Panc1 (cell line): ENCODE measurements at regions of chr1 and their contacts with region 1.

Region 1: GRCh38 chr1:218242169-218242568 is 42.9 kb upstream of the RRP15 start:
- DNase-seq: no peak
- ATAC-seq: no peak
- H3K4me3 ChIP-seq: no peak overlapping the region
- H3K27ac ChIP-seq: no peak overlapping the region
- H3K4me1 ChIP-seq: no peaks in the 10 kb centered on the region
- H3K27me3 ChIP-seq: no peaks in the 10 kb centered on the region
- CTCF ChIP-seq: no peak

Region 2: DNA sequence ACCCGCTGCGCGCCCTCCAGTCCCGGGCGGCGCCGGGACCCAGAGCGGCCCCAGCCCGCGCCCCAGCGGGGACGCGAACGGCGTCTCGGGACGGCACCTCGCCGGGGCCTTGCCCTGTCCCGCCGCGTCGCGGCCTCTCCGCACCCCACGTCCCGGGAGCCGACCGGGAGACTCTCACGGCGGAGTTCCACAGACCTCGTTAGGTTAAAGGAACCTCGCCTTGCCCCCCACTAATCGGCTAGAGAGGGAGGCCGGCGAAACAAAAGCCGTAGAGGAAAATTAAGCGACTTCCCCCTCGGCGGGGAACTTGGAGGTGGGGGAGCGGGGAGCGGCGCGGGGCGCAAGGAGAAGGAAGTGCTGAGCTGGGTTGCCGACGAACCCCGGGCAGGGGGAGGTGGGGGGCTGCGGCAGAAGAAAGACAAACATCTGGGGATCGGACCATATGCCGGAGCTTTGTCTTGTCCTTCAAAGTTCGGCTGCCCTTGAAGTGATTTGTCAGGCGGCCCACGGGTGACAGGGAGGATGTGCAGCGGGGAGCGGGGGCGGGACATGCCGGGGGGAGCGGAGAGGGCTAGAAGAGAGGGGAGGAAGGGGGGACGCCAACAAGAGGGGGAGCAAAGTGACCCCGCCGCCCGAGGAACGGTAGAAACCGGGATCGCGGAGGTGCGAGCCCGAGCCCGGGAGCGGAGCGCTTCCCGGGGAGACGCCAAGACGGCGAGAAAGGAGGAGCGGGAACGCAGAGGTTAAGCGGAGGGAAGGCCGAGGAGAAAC is 77.1 kb before region 1 on chr1:
- CTCF ChIA-PET with region 1: no interaction called
- POLR2A ChIA-PET with region 1: interaction called, 11 read pairs
- in situ Hi-C with region 1: no loop called
- intact Hi-C with region 1: no loop called
- DNase-seq: no peak
- ATAC-seq: peak; percentile 90
- H3K4me3 ChIP-seq: peak overlapping the region; percentile 46 to 62
- H3K27ac ChIP-seq: no peak overlapping the region
- H3K4me1 ChIP-seq: peaks cover 3% of the 10 kb centered on the region
- H3K27me3 ChIP-seq: peaks cover 46% of the 10 kb centered on the region
- CTCF ChIP-seq: peak; percentile 9

Region 3: GRCh38 chr1:218226005-218226404 is 16.2 kb before region 1 on chr1:
- CTCF ChIA-PET with region 1: no interaction called
- POLR2A ChIA-PET with region 1: interaction called, 12 read pairs
- in situ Hi-C with region 1: no loop called
- intact Hi-C with region 1: no loop called
- DNase-seq: no peak
- ATAC-seq: no peak
- H3K4me3 ChIP-seq: no peak overlapping the region
- H3K27ac ChIP-seq: no peak overlapping the region
- H3K4me1 ChIP-seq: no peaks in the 10 kb centered on the region
- H3K27me3 ChIP-seq: peaks cover 2% of the 10 kb centered on the region; the same call in 1 of the 2 replicates
- CTCF ChIP-seq: no peak

Region 4: DNA sequence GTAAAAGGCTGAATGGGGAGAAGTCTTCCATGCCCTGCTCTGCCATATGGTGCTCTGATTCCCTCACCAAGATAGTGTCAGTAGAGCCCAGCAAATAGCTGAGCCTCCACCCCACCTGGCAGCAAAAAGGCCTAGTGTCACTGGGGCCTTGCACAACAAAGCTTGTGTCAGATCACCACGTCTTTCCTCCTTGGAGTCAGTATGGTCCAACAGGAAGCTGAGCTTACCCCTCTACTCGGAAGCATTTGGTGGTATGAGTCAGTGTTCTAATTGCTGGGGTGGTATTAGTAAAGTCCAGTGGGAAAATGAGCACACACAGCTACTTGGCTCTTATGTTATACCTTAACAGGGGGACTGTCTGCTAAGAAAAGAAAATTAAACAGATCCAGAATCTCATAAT is 24.2 kb after region 1 on chr1:
- CTCF ChIA-PET with region 1: no interaction called
- POLR2A ChIA-PET with region 1: no interaction called
- in situ Hi-C with region 1: no loop called
- intact Hi-C with region 1: no loop called
- DNase-seq: no peak
- ATAC-seq: no peak
- H3K4me3 ChIP-seq: no peak overlapping the region
- H3K27ac ChIP-seq: no peak overlapping the region
- H3K4me1 ChIP-seq: no peaks in the 10 kb centered on the region
- H3K27me3 ChIP-seq: peaks cover 2% of the 10 kb centered on the region; the same call in 1 of the 2 replicates
- CTCF ChIP-seq: no peak

Region 5: GRCh38 chr1:218439541-218440295 is 197.5 kb after region 1 on chr1:
- CTCF ChIA-PET with region 1: no interaction called
- POLR2A ChIA-PET with region 1: no interaction called
- in situ Hi-C with region 1: no loop called
- intact Hi-C with region 1: no loop called
- DNase-seq: no peak
- ATAC-seq: peak; percentile 70; the same call in 1 of the 2 replicates
- H3K4me3 ChIP-seq: no peak overlapping the region
- H3K27ac ChIP-seq: peak overlapping the region; percentile 66; the same call in 1 of the 2 replicates
- H3K4me1 ChIP-seq: no peaks in the 10 kb centered on the region; the same call in 1 of the 2 replicates
- H3K27me3 ChIP-seq: no peaks in the 10 kb centered on the region
- CTCF ChIP-seq: no peak